Prostate gland (tissue), 2 donors: ENCODE measurements at regions of chr18 and their contacts with region 1.

Region 1: DNA sequence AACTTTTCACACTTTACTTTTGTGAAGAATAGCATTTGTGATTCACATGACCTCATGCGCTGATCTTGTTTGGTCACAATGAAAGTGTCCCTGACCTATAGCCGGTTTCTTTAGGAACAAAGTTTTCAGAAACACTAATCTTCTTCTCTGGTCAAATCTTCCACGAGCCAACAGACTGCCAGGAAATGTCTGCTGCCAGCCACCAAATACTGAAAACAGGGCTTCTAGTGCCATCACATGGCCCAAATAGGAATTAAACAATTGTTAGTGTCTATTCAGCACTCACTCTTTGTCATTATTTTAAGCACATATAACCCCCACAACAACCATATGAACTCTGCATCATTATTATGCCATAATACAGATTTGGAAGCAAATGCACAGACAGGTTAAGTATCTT is 286.5 kb upstream of the SYT4 start:
- DNase-seq: no peak
- H3K4me3 ChIP-seq: no peak overlapping the region
- H3K27ac ChIP-seq: no peak overlapping the region
- H3K4me1 ChIP-seq: no peaks in the 10 kb centered on the region
- H3K27me3 ChIP-seq: no peaks in the 10 kb centered on the region
- CTCF ChIP-seq: peak in 3 of 4 experiments; percentile 28 to 45 (median 31)
- POLR2A ChIP-seq: no peak

Region 2: GRCh38 chr18:42048150-42048549 is 1515.6 kb before region 1 on chr18:
- intact Hi-C with region 1: loop called (anchors 10 kb)
- DNase-seq: no peak
- H3K4me3 ChIP-seq: no peak overlapping the region
- H3K27ac ChIP-seq: no peak overlapping the region
- H3K4me1 ChIP-seq: no peaks in the 10 kb centered on the region
- H3K27me3 ChIP-seq: no peaks in the 10 kb centered on the region
- CTCF ChIP-seq: no peak
- POLR2A ChIP-seq: no peak

Region 3: GRCh38 chr18:43220691-43221090 is 343.1 kb before region 1 on chr18:
- intact Hi-C with region 1: no loop called
- DNase-seq: no peak
- H3K4me3 ChIP-seq: no peak overlapping the region
- H3K27ac ChIP-seq: no peak overlapping the region
- H3K4me1 ChIP-seq: no peaks in the 10 kb centered on the region
- H3K27me3 ChIP-seq: no peaks in the 10 kb centered on the region
- CTCF ChIP-seq: no peak
- POLR2A ChIP-seq: no peak

Region 4: GRCh38 chr18:43819397-43819796 is 255.6 kb after region 1 on chr18:
- intact Hi-C with region 1: no loop called
- DNase-seq: no peak
- H3K4me3 ChIP-seq: no peak overlapping the region
- H3K27ac ChIP-seq: no peak overlapping the region
- H3K4me1 ChIP-seq: no peaks in the 10 kb centered on the region
- H3K27me3 ChIP-seq: no peaks in the 10 kb centered on the region
- CTCF ChIP-seq: no peak
- POLR2A ChIP-seq: no peak